Calu3 (cell line): ENCODE measurements at regions of chr12 and their contacts with region 1.

Region 1: DNA sequence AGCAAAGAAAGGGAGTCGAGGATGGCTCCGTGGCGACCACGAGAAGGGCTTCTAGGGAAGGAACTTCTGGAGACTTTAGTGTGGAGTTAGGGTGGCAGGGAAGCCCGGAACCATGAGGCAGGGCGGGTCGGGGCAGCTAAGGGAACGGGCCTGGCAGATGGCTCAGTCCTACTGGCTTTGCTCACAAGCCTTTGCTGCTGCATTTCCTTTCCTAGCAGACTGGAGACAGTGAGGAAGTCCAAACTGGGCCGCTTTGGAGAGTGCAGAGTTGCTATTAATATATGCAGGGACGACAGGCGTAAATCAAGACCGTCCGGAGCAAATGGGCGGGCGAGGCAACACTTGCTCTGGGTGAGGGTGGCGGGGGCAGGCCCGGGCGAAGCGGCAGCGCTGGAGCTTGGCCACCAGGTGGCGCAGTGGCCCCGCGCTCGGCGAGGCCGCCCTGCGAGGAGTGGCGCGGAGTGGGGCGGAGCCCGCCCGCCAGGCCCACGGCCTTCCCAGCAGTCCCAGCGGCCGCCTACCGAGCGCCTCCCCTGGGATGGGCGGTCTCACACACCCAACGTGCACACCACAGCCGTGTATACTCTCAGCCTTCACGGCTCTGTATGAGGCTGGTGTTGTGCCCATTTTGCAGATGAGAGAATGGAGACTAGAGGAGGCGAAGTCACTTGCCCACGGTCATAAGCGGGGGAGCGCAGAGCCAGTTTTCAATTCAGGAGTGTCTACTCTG is 24.4 kb upstream of the LRTM2 start:
- DNase-seq: peak; percentile 95
- H3K4me3 Mint-ChIP-seq: peak overlapping the region; percentile 77
- H3K27ac Mint-ChIP-seq: peak overlapping the region; percentile 8
- H3K4me1 Mint-ChIP-seq: no peaks in the 10 kb centered on the region
- H3K27me3 Mint-ChIP-seq: peaks cover 29% of the 10 kb centered on the region
- CTCF ChIP-seq: peak; percentile 96

Region 2: DNA sequence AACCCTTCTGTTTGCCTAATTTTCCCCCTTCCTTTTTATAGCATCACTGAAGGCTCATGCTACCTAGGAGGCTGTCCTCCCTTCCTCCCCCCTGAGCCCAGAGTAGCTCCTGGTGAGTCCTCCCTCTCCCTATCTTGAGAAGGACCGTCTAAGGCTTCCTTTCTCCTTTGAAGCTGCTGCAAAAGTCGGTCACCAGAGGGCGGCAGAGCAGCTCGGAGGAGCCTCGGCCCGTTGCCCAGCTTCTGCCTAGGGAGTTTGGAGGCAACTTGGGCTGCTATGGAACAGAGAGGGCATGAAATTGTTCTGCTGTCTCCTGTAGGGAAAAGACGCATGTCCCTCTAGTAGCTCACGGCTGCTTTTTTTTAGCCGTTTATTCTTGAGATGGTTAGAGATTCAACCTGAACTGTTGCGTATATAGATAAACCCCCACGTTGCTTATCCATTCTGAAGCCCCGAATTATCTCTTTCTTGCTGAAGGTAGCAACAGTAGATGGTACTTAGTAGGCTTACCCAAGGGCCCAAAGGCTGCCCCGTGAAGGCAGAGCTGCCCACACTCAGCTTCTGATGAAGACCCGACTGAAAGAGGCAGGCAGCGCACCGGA is 161.3 kb before region 1 on chr12:
- CTCF ChIA-PET with region 1: interaction called, 22 read pairs
- intact Hi-C with region 1: loop called (anchors 1 kb)
- DNase-seq: peak; percentile 74
- H3K4me3 Mint-ChIP-seq: no peak overlapping the region
- H3K27ac Mint-ChIP-seq: no peak overlapping the region
- H3K4me1 Mint-ChIP-seq: no peaks in the 10 kb centered on the region
- H3K27me3 Mint-ChIP-seq: peaks cover 89% of the 10 kb centered on the region
- CTCF ChIP-seq: peak; percentile 74

Region 3: DNA sequence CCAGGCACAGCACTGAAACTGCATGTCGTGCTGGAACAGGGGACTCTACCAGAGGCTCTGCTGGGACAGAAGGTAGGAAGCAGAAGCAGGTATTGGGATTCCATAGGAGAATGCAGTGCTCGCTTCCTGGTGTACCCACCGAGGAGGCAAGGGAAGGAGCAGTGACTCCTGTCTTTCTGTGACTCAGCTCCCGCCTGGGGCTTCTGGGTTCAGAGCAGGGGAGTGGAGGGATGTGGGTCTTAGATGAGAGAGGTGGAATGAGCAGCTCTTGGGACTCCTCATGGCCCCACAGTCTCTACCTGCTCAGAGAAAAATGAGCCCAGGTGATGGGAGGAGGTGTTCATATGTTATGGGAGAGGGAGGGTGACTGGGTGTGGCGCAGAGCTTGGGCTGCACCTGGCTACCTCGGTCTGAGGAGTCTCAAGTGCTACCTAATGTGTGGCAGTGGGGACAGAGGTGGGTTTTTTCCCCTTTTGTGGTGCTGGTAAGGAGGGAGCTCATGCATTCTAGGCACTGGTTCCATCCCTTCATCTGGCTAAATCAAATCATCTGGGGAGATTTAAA is 140.6 kb before region 1 on chr12:
- CTCF ChIA-PET with region 1: interaction called, 62 read pairs
- intact Hi-C with region 1: loop called (anchors 1 kb)
- DNase-seq: no peak
- H3K4me3 Mint-ChIP-seq: no peak overlapping the region
- H3K27ac Mint-ChIP-seq: no peak overlapping the region
- H3K4me1 Mint-ChIP-seq: peaks cover 6% of the 10 kb centered on the region
- H3K27me3 Mint-ChIP-seq: peaks cover 22% of the 10 kb centered on the region
- CTCF ChIP-seq: no peak

Region 4: DNA sequence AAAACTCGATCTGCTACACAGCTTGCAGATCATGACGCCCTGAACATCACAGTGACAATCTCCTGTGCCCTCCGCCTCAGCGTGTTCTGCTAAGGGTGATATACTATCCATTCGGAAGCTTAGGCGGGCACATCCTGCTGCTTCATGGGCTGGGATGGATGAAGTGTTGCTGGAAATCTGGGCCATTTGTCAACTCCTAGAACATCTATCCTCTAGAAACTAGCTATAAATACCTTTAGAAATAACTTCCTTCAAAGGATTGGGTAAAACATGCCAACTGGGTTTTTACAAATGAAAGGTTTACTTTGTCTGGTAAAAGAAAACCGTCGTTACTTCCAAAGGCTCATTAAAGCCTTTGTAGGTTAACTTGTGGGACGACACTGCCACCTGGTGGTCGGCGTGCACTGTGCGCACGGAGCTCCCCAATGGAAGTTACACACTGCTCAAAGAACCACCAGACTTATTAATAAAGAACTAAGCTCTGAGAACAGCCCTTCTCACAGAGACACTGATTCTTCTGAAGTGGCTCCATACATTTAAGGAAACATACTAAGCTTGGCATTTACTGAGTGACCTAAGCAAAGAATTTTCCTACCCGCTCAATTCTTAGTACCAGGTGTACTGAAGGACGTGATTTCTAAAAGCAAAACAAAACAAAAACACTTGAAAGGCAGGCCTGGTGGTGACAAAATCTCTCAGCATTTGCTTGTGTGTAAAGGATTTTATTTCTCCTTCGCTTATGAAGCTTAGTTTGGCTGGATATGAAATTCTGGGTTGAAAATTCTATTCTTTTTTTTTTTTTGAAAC is 144.1 kb after region 1 on chr12:
- CTCF ChIA-PET with region 1: interaction called, 23 read pairs
- intact Hi-C with region 1: loop called (anchors 1 kb)
- DNase-seq: peak; percentile 88
- H3K4me3 Mint-ChIP-seq: no peak overlapping the region
- H3K27ac Mint-ChIP-seq: no peak overlapping the region
- H3K4me1 Mint-ChIP-seq: peaks cover 8% of the 10 kb centered on the region
- H3K27me3 Mint-ChIP-seq: peaks cover 15% of the 10 kb centered on the region
- CTCF ChIP-seq: peak; percentile 88

Region 5: GRCh38 chr12:2583091-2583497 is 787.1 kb after region 1 on chr12:
- CTCF ChIA-PET with region 1: no interaction called
- intact Hi-C with region 1: loop called (anchors 5 kb)
- DNase-seq: peak; percentile 80
- H3K4me3 Mint-ChIP-seq: no peak overlapping the region
- H3K27ac Mint-ChIP-seq: no peak overlapping the region
- H3K4me1 Mint-ChIP-seq: no peaks in the 10 kb centered on the region
- H3K27me3 Mint-ChIP-seq: peaks cover 93% of the 10 kb centered on the region
- CTCF ChIP-seq: peak; percentile 88